ENCODE measurements at regions of chr10 and their contacts with region 1.

Region 1: DNA sequence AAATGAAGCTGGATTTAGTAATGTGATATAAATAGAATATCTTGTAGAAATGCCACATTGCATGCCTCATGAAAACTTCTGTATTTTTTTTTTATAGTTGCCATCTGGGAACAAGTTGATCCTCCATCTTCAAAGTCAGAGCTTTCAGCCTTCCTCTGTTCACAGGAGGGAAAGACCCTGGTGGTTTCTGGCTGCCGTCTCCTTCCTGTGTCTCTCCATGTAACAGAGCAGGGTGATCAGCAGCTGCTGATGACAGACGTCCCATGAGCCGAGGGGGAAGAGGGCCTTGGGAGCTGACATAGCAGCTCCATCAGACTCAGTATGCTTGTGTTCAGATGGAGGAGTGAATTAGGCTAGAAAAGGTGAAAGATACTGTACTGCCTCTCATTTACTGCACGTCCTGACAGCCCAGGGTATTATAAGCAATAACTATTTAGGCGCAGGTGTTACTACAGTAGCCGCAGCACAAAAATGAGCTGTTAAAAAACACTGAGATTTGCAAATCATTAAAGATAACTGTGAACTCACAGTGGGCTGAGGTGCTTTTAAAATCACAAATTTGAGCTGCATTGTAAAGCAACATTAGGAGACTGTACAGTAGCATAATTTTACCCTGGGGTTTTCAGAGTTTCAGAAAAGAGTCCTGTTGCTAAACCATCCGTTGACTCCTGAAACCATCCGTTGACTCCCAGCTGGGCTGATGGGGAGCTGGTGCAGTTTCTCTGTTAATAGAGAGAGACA is 103.3 kb downstream of the CFAP58 start:
- DNase-seq: no peak
- ATAC-seq: no peak
- H3K4me3 ChIP-seq: no peak overlapping the region
- H3K27ac ChIP-seq: no peak overlapping the region
- H3K4me1 ChIP-seq: no peaks in the 10 kb centered on the region
- H3K27me3 ChIP-seq: no peaks in the 10 kb centered on the region; the same call in 1 of the 2 replicates
- CTCF ChIP-seq: no peak

Region 2: DNA sequence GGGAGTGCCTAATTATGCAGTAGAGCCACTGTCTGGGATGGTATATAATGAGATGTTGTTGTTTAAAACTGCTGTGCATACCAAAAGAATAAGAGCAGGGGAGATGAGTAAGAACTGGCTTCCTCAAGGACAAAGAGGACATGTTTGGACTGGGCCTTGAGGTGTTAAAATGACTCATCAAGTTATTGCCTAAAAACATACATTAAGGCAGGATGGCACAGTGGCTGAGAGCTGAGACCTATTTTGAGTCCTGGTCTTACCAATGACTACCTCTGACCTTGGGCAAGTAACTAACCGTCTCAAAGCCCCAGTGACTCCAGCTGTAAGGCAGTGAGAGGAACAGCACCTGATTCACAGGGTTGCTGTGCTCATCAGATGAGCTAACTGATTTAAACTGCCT is 32.3 kb before region 1 on chr10:
- CTCF ChIA-PET with region 1: no interaction called
- POLR2A ChIA-PET with region 1: interaction called, 10 read pairs
- in situ Hi-C with region 1: no loop called
- intact Hi-C with region 1: no loop called
- DNase-seq: no peak
- ATAC-seq: no peak
- H3K4me3 ChIP-seq: no peak overlapping the region
- H3K27ac ChIP-seq: no peak overlapping the region
- H3K4me1 ChIP-seq: no peaks in the 10 kb centered on the region
- H3K27me3 ChIP-seq: peaks cover 6% of the 10 kb centered on the region; the same call in 1 of the 2 replicates
- CTCF ChIP-seq: no peak

Region 3: GRCh38 chr10:104472493-104472892 is 15.5 kb after region 1 on chr10:
- CTCF ChIA-PET with region 1: no interaction called
- POLR2A ChIA-PET with region 1: no interaction called
- in situ Hi-C with region 1: no loop called
- intact Hi-C with region 1: no loop called
- DNase-seq: no peak
- ATAC-seq: peak; percentile 42; the same call in 1 of the 2 replicates
- H3K4me3 ChIP-seq: no peak overlapping the region
- H3K27ac ChIP-seq: no peak overlapping the region
- H3K4me1 ChIP-seq: no peaks in the 10 kb centered on the region
- H3K27me3 ChIP-seq: no peaks in the 10 kb centered on the region; the same call in none of the 2 replicates
- CTCF ChIP-seq: no peak

Region 4: GRCh38 chr10:104622598-104623209 is 165.7 kb after region 1 on chr10:
- CTCF ChIA-PET with region 1: no interaction called
- POLR2A ChIA-PET with region 1: interaction called, 13 read pairs
- in situ Hi-C with region 1: no loop called
- intact Hi-C with region 1: no loop called
- DNase-seq: no peak
- ATAC-seq: peak; percentile 75
- H3K4me3 ChIP-seq: no peak overlapping the region
- H3K27ac ChIP-seq: no peak overlapping the region
- H3K4me1 ChIP-seq: no peaks in the 10 kb centered on the region
- H3K27me3 ChIP-seq: peaks cover 5% of the 10 kb centered on the region; the same call in 1 of the 2 replicates
- CTCF ChIP-seq: peak; percentile 71

Measured in Panc1 (cell line).